ENCODE measurements at regions of chr4 and their contacts with region 1.

Region 1: GRCh38 chr4:174437324-174437723 is 85.0 kb downstream of the HPGD start:
- DNase-seq: no peak
- H3K4me3 ChIP-seq: no peak overlapping the region
- H3K27ac ChIP-seq: no peak overlapping the region
- H3K4me1 ChIP-seq: no peaks in the 10 kb centered on the region
- H3K27me3 ChIP-seq: no peaks in the 10 kb centered on the region
- CTCF ChIP-seq: no peak

Region 2: GRCh38 chr4:174222266-174222872 is 215.0 kb before region 1 on chr4:
- CTCF ChIA-PET with region 1: no interaction called
- POLR2A ChIA-PET with region 1: no interaction called
- intact Hi-C with region 1: no loop called
- DNase-seq: no peak
- H3K4me3 ChIP-seq: no peak overlapping the region
- H3K27ac ChIP-seq: no peak overlapping the region
- H3K4me1 ChIP-seq: no peaks in the 10 kb centered on the region
- H3K27me3 ChIP-seq: no peaks in the 10 kb centered on the region
- CTCF ChIP-seq: peak; percentile 71

Region 3: DNA sequence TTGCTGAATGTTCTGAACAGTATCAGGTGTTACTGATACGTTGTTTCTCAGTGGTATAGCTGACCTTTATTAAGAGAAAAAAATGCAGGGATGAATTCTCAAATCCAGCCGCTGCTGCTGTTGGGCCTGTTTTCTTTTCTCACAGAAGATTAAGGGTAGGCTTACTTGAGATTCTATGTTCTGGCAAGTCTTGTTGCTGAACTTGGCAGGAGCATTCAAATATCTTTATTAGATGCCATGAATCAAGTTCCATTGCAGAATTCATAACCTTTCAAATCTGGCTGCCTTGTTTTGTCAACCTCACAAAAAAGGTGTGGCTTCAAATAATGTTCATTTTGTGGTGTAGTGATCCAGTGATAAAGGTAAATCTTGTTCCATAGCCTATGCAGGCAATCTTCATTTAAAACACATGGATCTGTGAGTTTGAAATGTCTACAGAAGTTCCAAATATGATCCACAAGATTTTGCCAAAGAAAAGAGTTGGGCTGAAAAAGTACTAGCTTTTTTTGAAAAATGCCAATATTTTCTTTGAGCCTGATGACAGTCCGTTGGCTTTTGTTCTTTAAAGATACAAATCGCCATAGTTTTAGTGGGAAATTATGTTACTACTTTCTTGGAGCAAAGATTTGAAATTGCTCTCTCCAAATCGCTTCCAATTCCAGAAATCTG is 13.3 kb after region 1 on chr4:
- CTCF ChIA-PET with region 1: interaction called, 3 read pairs
- POLR2A ChIA-PET with region 1: interaction called, 17 read pairs
- intact Hi-C with region 1: no loop called
- DNase-seq: no peak
- H3K4me3 ChIP-seq: no peak overlapping the region
- H3K27ac ChIP-seq: no peak overlapping the region
- H3K4me1 ChIP-seq: no peaks in the 10 kb centered on the region
- H3K27me3 ChIP-seq: no peaks in the 10 kb centered on the region
- CTCF ChIP-seq: no peak

Region 4: GRCh38 chr4:174631901-174632758 is 194.8 kb after region 1 on chr4:
- CTCF ChIA-PET with region 1: no interaction called
- POLR2A ChIA-PET with region 1: no interaction called
- intact Hi-C with region 1: no loop called
- DNase-seq: no peak
- H3K4me3 ChIP-seq: no peak overlapping the region
- H3K27ac ChIP-seq: no peak overlapping the region
- H3K4me1 ChIP-seq: no peaks in the 10 kb centered on the region
- H3K27me3 ChIP-seq: no peaks in the 10 kb centered on the region
- CTCF ChIP-seq: peak; percentile 70

Measured in PC-9 (cell line).